Mammary epithelial cell (primary cell): ENCODE measurements at regions of chr2 and their contacts with region 1.

Region 1: DNA sequence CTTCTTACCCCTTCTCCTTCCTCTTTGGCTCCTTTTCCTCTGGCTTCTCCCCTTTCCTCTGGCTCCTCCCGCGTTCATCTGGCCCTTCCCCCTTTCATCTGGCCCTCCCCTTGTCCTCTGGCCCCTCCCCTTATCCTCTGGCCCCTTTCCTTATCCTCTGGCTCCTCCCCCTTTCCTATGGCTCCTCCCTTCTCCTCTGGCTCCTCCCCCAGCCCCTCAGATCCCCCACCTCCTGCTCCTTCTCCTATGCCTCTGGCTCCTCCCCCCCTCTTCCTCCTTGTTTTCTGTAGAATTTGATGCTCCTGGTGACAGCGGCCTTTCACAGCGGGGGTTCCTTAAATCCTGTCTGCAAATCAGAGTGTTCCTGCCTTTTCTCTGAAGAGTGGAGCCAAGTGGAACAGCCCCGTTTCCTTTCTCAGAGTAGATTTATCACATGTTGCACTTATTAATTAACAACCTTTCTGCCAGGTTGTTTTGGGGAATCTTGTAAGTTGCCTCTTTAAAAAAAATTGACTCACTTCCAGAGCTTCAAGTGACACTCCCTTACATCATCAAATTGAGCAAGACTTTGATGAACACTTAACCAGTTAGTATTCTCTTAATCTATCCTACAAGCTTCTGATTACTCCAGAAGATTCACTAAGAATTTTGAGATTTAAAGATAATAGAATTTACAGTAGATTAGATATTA is 27.9 kb downstream of the FABP1 start:
- DNase-seq: peak; percentile 38
- H3K4me3 ChIP-seq: no peak overlapping the region
- H3K27ac ChIP-seq: no peak overlapping the region
- H3K4me1 ChIP-seq: peaks cover 4% of the 10 kb centered on the region
- H3K27me3 ChIP-seq: no peaks in the 10 kb centered on the region
- CTCF ChIP-seq: no peak

Region 2: DNA sequence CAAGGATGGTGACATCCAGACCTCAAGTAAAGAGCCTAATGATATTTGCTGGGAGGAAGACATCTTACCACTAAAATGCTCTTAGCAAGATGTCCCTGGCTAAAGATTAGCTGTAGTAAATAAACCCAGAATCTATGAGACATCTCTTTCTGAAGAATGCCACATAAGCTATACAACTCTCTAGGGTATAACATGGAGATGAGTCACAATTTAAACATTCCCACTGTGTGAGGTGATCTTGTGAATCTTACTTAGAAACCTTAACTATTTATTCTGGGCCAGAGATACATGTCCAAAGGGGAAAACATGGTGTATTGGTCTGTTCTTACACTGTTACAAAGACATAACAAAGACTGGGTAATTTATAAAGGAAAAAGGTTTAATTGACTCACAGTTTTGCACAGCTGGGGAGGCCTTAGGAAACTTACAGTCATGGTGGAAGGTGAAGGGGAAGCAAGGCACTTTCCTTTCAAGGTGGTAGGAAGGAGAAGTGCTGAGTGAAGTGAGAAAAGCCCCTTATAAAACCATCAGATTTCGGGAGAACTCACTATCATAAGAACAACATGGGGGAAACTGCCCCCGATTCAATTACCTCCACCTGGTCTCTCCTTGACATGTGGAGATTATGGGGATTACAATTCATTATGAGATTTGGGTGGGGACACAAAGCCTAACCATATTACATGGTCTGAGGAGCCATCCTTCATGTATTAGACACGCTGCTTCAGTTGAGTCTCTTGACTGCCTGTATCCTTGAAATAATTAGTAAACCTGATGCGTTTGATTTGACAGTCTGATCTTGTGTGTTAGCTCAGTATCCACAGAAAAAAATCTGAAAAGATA is 61.5 kb before region 1 on chr2:
- CTCF ChIA-PET with region 1: no interaction called
- dilution Hi-C with region 1: no loop called
- in situ Hi-C with region 1: no loop called
- intact Hi-C with region 1: no loop called
- DNase-seq: peak; percentile 87
- H3K4me3 ChIP-seq: no peak overlapping the region
- H3K27ac ChIP-seq: peak overlapping the region; percentile 46
- H3K4me1 ChIP-seq: peaks cover 21% of the 10 kb centered on the region
- H3K27me3 ChIP-seq: no peaks in the 10 kb centered on the region
- CTCF ChIP-seq: no peak

Region 3: DNA sequence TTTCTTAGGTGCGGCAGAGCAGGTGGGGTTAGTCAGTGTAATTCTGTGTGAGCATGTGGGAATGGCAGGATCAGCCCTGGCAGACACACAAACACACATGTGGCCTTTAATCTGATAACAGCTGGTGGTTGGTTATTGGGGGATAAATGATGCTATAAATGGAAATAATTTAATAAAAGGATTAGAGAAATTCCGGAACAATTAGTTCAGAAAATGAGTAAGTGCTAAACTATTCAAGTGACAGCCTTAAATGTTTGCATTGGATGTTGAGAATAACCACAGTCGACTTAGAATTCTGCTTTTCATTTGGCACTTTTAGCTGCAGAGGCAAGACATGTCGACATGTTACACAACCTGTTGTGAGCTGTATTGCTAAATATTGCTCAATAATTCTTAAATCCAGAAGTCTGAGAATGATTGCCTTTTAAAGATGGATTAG is 25.1 kb before region 1 on chr2:
- CTCF ChIA-PET with region 1: no interaction called
- dilution Hi-C with region 1: no loop called
- in situ Hi-C with region 1: no loop called
- intact Hi-C with region 1: loop called (anchors 2 kb)
- DNase-seq: peak; percentile 82
- H3K4me3 ChIP-seq: no peak overlapping the region
- H3K27ac ChIP-seq: no peak overlapping the region
- H3K4me1 ChIP-seq: peaks cover 11% of the 10 kb centered on the region
- H3K27me3 ChIP-seq: no peaks in the 10 kb centered on the region
- CTCF ChIP-seq: no peak